CD14-positive monocyte (primary cell): ENCODE measurements at regions of chr7 and their contacts with region 1.

Region 1: DNA sequence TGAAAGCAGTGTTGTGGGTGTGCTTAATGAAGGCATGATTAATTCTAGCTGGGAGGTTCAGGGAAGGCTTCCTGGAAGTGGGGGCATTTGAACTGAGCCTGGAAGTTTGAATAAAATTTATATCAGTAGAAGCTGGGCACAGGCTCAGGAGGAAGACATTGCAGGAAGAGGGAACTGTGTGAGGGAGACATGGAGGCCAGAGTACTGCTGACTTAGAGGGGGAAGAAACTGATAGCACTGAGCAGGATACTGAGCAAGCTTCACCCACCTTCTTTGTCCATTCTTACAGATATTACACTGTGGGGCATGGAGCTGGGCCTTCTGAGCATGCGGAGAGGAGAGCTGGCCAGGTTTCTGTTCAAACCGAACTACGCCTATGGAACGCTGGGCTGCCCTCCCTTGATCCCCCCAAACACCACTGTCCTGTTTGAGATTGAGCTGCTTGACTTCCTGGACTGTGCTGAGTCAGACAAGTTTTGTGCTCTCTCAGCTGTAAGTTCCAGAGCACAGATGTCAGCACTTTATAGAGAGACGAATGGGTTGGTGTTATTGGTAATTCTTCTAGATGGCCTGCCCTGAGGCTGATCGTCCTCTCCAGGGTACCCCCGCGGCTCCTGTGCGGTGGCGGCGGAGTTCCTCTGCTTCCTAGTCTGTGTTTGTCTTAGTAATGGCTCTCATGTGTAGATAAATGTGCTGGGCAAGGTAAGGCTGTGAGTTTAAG is 2.1 kb downstream of the FKBP6 start:
- DNase-seq: no peak
- H3K4me3 ChIP-seq: no peak overlapping the region
- H3K4me3 Mint-ChIP-seq: no peak overlapping the region
- H3K27ac ChIP-seq: no peak overlapping the region
- H3K27ac Mint-ChIP-seq: no peak overlapping the region
- H3K4me1 ChIP-seq: peaks cover 0 to under 1% of the 10 kb centered on the region in 2 donors
- H3K4me1 Mint-ChIP-seq: peaks cover 2% of the 10 kb centered on the region
- H3K27me3 ChIP-seq: no peaks in the 10 kb centered on the region
- H3K27me3 Mint-ChIP-seq: peaks cover 3 to 18% (median 7%) of the 10 kb centered on the region in 3 donors
- CTCF ChIP-seq: no peak

Region 2: GRCh38 chr7:73312831-73313526 is 17.0 kb before region 1 on chr7:
- intact Hi-C with region 1: loop called in 1 of 2 experiments (anchors 2 kb)
- DNase-seq: no peak
- H3K4me3 ChIP-seq: no peak overlapping the region
- H3K4me3 Mint-ChIP-seq: no peak overlapping the region
- H3K27ac ChIP-seq: no peak overlapping the region
- H3K27ac Mint-ChIP-seq: no peak overlapping the region
- H3K4me1 ChIP-seq: peaks cover 8 to 9% of the 10 kb centered on the region in 2 donors
- H3K4me1 Mint-ChIP-seq: peaks cover 13% of the 10 kb centered on the region
- H3K27me3 ChIP-seq: no peaks in the 10 kb centered on the region
- H3K27me3 Mint-ChIP-seq: peaks cover 0 to 3% (median 2%) of the 10 kb centered on the region in 3 donors
- CTCF ChIP-seq: no peak

Region 3: GRCh38 chr7:73376671-73377412 is 46.8 kb after region 1 on chr7:
- intact Hi-C with region 1: no loop called
- DNase-seq: no peak
- H3K4me3 ChIP-seq: no peak overlapping the region
- H3K4me3 Mint-ChIP-seq: peak overlapping the region in 1 of 2 donors; percentile 85
- H3K27ac ChIP-seq: no peak overlapping the region
- H3K27ac Mint-ChIP-seq: no peak overlapping the region
- H3K4me1 ChIP-seq: peaks cover 0 to 8% of the 10 kb centered on the region in 2 donors
- H3K4me1 Mint-ChIP-seq: peaks cover 17% of the 10 kb centered on the region
- H3K27me3 ChIP-seq: peaks cover 0 to 23% of the 10 kb centered on the region in 2 donors
- H3K27me3 Mint-ChIP-seq: peaks cover 27 to 31% (median 30%) of the 10 kb centered on the region in 3 donors
- CTCF ChIP-seq: no peak

Region 4: GRCh38 chr7:73451780-73452398 is 121.9 kb after region 1 on chr7:
- intact Hi-C with region 1: loop called in 1 of 2 experiments (anchors 2 kb)
- DNase-seq: peak; percentile 41 to 72 (median 52)
- H3K4me3 ChIP-seq: no peak overlapping the region
- H3K4me3 Mint-ChIP-seq: no peak overlapping the region
- H3K27ac ChIP-seq: no peak overlapping the region
- H3K27ac Mint-ChIP-seq: no peak overlapping the region
- H3K4me1 ChIP-seq: no peaks in the 10 kb centered on the region
- H3K4me1 Mint-ChIP-seq: no peaks in the 10 kb centered on the region
- H3K27me3 ChIP-seq: no peaks in the 10 kb centered on the region
- H3K27me3 Mint-ChIP-seq: no peaks in the 10 kb centered on the region
- CTCF ChIP-seq: peak; percentile 98